Activated B cell treated with CpG ODN at 0.5 μM for 24 hours (primary cell): ENCODE measurements at regions of chr20 and their contacts with region 1.

Region 1: DNA sequence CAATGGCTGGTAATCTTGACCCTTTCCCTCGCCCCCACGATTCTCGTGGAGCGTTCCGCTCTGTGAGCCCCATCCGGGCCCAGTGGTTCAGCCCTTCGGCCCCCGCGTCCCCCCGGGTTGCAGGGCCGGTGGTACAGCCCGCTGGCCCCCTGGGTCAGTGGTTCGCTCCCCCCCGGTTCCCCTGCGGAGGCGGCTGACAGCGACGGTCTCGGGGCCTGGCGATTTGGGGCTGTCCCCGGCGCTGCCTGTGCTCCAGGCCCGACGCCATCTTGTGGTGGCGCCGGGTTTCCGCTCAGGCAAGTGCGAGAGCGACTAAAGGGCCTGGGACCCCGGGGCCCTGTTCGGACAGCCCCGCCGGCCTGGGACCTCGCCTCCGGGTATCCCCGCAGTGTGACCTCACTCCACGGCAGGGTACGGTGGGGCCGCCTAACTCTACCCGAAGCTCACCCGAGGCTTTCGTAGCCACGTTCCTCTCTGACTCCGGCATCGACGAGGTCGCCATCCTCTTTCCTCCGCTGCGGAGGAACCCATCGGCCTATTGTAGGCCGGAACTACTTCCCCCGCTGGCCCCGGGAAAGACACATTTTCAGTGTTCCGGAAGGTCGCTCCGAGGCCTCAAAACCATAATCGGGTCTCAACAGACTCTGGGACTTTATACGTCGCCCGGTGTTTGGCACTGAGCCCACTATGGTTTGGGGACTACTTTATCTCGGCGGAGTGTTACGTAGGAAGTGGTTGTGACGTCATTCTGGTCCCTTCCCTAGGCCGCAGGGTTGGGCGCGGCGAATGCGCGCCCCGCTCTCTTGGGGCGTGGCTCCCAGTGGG is at the start of gene ZNF335:
- DNase-seq: peak; percentile 99
- ATAC-seq: peak; percentile 82
- H3K4me3 Mint-ChIP-seq: peak within 1 kb of the TSS; percentile 94
- H3K27ac Mint-ChIP-seq: peak within 1 kb of the TSS; percentile 100
- H3K4me1 Mint-ChIP-seq: peaks cover 25% of the 10 kb centered on the region
- H3K27me3 Mint-ChIP-seq: no peaks in the 10 kb centered on the region
- CTCF ChIP-seq: no peak
- total RNA-seq, gene ZNF335: 39.2 and 49.6 TPM in 2 replicates

Region 2: DNA sequence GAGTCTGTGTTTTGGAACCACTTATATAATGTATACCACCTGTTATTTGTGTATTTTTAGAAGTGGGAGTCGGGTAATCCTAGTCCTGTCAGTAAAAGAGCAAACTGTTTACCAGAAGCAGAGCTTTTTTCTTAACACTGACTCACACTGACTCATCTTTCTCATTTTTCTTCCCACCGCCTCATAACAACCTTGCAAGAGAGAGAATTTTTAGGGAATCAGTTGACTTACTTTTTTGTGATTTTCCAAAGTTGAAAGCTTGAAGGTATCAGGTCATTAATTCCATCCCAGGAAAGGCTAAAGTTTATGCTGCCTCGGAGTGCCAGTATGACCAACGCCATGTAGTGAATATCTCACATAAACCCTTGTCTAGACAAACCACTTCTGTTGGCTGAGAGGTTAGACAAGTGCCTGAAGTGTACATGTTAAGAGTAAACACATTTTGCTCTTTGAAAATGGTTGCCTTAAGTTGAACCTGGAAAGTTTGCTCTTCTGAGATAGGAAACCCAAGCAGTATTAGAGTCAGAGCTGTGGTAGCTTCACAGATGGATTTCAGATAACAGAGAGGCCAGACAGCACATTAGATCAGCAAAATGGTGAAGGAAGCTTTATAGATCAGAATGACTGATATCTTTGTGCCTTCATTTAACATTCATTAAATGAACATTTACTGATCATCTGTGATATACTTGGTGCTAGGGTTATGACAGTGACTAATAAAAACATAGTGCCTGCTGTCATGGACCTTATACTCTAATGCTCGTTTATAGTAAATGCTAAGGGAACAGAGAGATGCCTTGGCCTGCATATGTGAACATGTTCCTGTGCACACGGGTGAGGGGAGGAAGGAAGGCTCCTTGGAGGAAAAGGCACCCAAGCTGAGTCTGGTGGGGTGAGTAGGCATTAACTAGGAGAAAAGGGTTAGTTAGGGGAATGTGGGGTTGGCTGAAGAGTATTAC is 1418.7 kb before region 1 on chr20:
- CTCF ChIA-PET with region 1: no interaction called
- POLR2A ChIA-PET with region 1: no interaction called
- intact Hi-C with region 1: no loop called
- DNase-seq: no peak
- ATAC-seq: no peak
- H3K4me3 Mint-ChIP-seq: no peak overlapping the region
- H3K27ac Mint-ChIP-seq: no peak overlapping the region
- H3K4me1 Mint-ChIP-seq: no peaks in the 10 kb centered on the region
- H3K27me3 Mint-ChIP-seq: peaks cover 1% of the 10 kb centered on the region
- CTCF ChIP-seq: no peak

Region 3: GRCh38 chr20:45362804-45363610 is 608.9 kb before region 1 on chr20 and contains the start of gene SYS1:
- CTCF ChIA-PET with region 1: no interaction called
- POLR2A ChIA-PET with region 1: no interaction called
- intact Hi-C with region 1: loop called (anchors 5 kb)
- DNase-seq: peak; percentile 94
- ATAC-seq: peak; percentile 84
- H3K4me3 Mint-ChIP-seq: peak within 1 kb of the TSS; percentile 100
- H3K27ac Mint-ChIP-seq: peak within 1 kb of the TSS; percentile 99
- H3K4me1 Mint-ChIP-seq: peaks cover 53% of the 10 kb centered on the region
- H3K27me3 Mint-ChIP-seq: no peaks in the 10 kb centered on the region
- CTCF ChIP-seq: peak; percentile 69
- total RNA-seq, gene SYS1: 31.7 and 35.2 TPM in 2 replicates

Region 4: GRCh38 chr20:45857114-45857881 is 114.6 kb before region 1 on chr20 and contains the starts of genes ACOT8 and ZSWIM3:
- CTCF ChIA-PET with region 1: no interaction called
- POLR2A ChIA-PET with region 1: interaction called, 8 read pairs
- intact Hi-C with region 1: loop called (anchors 1 kb)
- DNase-seq: peak; percentile 67
- ATAC-seq: peak; percentile 98
- H3K4me3 Mint-ChIP-seq: peak within 1 kb of the TSS; percentile 94
- H3K27ac Mint-ChIP-seq: peak within 1 kb of the TSS; percentile 94
- H3K4me1 Mint-ChIP-seq: peaks cover 48% of the 10 kb centered on the region
- H3K27me3 Mint-ChIP-seq: no peaks in the 10 kb centered on the region
- CTCF ChIP-seq: no peak
- total RNA-seq, gene ACOT8: 24.5 and 27.3 TPM in 2 replicates
- total RNA-seq, gene ZSWIM3: 5.9 and 6.4 TPM in 2 replicates

Region 5: GRCh38 chr20:45934586-45935415 is 37.1 kb before region 1 on chr20 and contains the start of gene PCIF1:
- CTCF ChIA-PET with region 1: interaction called, 7 read pairs
- POLR2A ChIA-PET with region 1: interaction called, 110 read pairs
- intact Hi-C with region 1: loop called (anchors 1 kb)
- DNase-seq: peak; percentile 97
- ATAC-seq: peak; percentile 80
- H3K4me3 Mint-ChIP-seq: peak within 1 kb of the TSS; percentile 97
- H3K27ac Mint-ChIP-seq: peak within 1 kb of the TSS; percentile 98
- H3K4me1 Mint-ChIP-seq: peaks cover 29% of the 10 kb centered on the region
- H3K27me3 Mint-ChIP-seq: no peaks in the 10 kb centered on the region
- CTCF ChIP-seq: no peak
- total RNA-seq, gene PCIF1: 48.3 and 55.7 TPM in 2 replicates

Region 6: DNA sequence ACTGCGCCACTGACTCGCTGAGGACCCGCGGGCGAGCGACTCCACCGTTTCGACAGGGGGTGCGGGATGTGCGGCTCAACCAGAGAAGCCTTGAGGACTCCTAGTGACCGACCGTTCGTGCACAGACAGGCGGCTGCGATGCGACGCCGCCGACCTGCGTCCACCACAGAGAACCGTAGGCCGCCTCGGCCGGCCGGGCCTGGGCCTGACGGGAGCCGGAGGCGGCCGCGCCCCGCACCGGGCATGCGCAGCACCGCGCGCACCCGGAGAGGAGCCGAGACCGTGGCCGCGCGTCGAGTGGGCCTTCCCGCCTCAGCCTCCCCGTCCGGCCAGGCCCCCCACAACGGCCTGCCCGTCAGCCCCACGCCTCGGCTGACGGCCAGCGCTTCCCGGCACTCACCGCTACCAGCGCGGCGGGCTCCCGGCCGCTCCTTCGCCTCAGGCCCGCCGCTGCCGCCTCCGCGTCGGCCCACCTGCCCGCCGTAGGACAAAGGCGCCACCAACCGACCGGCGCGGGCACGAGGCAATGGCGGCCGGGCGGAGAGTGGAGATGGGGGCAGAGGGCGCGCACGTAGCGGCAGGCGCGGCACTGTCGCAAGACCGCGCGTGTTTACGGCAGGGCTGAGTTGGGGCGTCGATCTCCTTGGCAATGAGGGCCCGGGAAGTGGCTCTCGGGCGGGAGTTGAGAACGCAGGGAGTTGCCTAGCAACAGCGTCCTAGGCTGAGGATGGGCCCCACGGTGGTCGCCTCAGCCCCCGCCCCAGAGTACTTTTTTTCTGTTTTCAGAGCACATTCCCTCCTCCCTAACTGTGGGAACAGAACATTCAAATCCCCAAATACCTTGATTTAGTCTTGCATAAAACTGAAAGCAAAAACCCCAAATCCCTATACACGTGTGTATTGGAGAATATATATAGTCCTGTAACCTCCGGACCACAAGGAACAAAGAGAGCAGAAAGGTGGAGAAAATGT is 117.8 kb after region 1 on chr20 and contains the start of gene NCOA5:
- CTCF ChIA-PET with region 1: no interaction called
- POLR2A ChIA-PET with region 1: interaction called, 3 read pairs
- intact Hi-C with region 1: loop called (anchors 1 kb)
- DNase-seq: peak; percentile 93
- ATAC-seq: peak; percentile 91
- H3K4me3 Mint-ChIP-seq: peak within 1 kb of the TSS; percentile 90
- H3K27ac Mint-ChIP-seq: peak within 1 kb of the TSS; percentile 89
- H3K4me1 Mint-ChIP-seq: peaks cover 53% of the 10 kb centered on the region
- H3K27me3 Mint-ChIP-seq: no peaks in the 10 kb centered on the region
- CTCF ChIP-seq: no peak
- total RNA-seq, gene NCOA5: 46.4 and 53.1 TPM in 2 replicates

Region 7: DNA sequence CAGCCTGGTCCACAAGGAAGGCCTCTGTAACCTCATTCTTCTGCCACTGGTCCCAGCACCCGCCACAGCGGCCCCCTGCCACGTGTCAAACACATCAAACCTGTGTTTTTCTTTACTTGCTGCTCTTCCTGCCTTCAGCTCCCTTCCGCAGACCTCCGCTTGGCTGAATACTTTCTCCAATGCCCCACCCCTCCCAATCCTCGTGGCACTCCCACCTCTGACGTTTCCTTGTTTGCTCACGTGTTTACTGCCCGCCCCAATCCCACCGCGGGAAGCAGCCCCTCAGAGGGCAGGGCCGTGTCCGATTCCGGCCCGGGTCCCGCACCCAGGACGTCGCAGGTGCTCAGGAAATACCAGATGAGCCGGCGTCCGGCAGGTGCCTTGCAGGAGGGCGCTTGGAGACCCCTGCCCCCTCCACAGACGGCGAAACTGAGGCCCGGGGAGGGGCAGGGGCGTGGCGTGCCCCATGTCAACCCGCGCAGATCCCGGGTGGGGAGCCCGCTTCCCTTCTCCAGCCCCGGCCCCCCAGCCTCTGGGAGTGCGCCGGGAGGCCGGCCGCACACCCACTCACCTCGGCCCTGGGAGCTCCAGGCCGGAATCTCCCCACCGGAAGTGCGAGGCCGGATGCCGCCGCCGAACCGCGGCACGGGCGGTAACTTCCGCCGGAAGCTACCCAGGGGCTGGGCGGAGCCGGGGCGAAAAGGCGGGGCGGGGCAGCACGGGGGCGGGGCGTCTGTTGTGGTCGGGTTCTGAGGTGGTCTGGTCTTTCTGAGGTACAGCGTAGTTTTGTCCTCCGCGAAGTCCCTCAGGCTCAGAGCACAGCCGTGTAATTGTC is 392.1 kb after region 1 on chr20:
- CTCF ChIA-PET with region 1: no interaction called
- POLR2A ChIA-PET with region 1: interaction called, 5 read pairs
- intact Hi-C with region 1: loop called (anchors 5 kb)
- DNase-seq: peak; percentile 84
- ATAC-seq: peak; percentile 79
- H3K4me3 Mint-ChIP-seq: peak overlapping the region; percentile 93
- H3K27ac Mint-ChIP-seq: peak overlapping the region; percentile 90
- H3K4me1 Mint-ChIP-seq: peaks cover 54% of the 10 kb centered on the region
- H3K27me3 Mint-ChIP-seq: no peaks in the 10 kb centered on the region
- CTCF ChIP-seq: no peak